GM12878 (cell line): ENCODE measurements at regions of chr3 and their contacts with region 1.

Region 1: GRCh38 chr3:160027541-160028195 is 39.0 kb downstream of the IL12A start:
- DNase-seq: peak; percentile 55
- ATAC-seq: peak; percentile 89
- H3K4me3 ChIP-seq: no peak overlapping the region
- H3K27ac ChIP-seq: peak overlapping the region; percentile 94
- H3K4me1 ChIP-seq: peaks cover 26% of the 10 kb centered on the region
- H3K27me3 ChIP-seq: no peaks in the 10 kb centered on the region
- CTCF ChIP-seq: no peak
- EP300 ChIP-seq: peak; percentile 61 to 64; a peak in 2 of 4 replicates
- POLR2A ChIP-seq: no peak
- RAD21 ChIP-seq: no peak

Region 2: GRCh38 chr3:160012108-160012507 is 15.6 kb before region 1 on chr3:
- CTCF ChIA-PET with region 1: interaction called, 8 read pairs
- POLR2A ChIA-PET with region 1: interaction called, 5 read pairs
- RAD21 ChIA-PET with region 1: interaction called, 13 read pairs
- SMC1A ChIA-PET with region 1: interaction called, 26 read pairs
- in situ Hi-C with region 1: no loop called
- intact Hi-C with region 1: loop called (anchors 2 kb)
- DNase-seq: peak; percentile 81
- ATAC-seq: peak; percentile 83
- H3K4me3 ChIP-seq: peak overlapping the region; percentile 22; the same call in 1 of the 2 replicates
- H3K27ac ChIP-seq: peak overlapping the region; percentile 94
- H3K4me1 ChIP-seq: peaks cover 48% of the 10 kb centered on the region
- H3K27me3 ChIP-seq: no peaks in the 10 kb centered on the region
- CTCF ChIP-seq: no peak
- EP300 ChIP-seq: peak; percentile 87 to 95; a peak in 3 of 4 replicates
- POLR2A ChIP-seq: no peak
- RAD21 ChIP-seq: no peak

Region 3: DNA sequence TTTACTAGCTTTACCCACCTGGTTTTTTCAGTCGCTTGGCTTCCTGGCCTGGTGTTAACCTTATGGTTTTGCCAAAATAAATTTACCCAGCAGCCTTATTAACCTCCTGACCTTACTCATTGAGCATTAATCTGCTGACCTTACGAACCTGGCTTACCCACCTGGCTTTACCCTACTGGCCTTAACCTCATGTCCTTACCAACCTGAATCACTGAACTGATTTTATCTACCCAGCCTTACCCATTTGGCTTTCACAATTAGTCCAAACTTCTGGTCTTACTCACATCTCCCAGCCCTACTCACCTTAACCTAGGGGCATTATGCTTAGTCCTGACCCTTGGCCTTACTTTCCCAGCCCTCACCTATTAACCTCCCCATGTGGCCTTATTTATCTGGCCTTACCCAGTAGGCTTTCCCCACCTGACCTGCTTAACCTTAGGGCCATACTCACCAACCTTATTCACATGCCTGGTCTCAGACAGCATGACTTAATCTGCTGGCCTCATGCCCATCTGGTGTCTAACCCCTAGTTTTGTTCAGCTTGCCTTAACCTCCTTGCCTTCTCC is 54.4 kb after region 1 on chr3:
- CTCF ChIA-PET with region 1: no interaction called
- POLR2A ChIA-PET with region 1: no interaction called
- RAD21 ChIA-PET with region 1: no interaction called
- SMC1A ChIA-PET with region 1: no interaction called
- in situ Hi-C with region 1: no loop called
- intact Hi-C with region 1: no loop called
- DNase-seq: no peak
- ATAC-seq: no peak
- H3K4me3 ChIP-seq: no peak overlapping the region
- H3K27ac ChIP-seq: no peak overlapping the region
- H3K4me1 ChIP-seq: no peaks in the 10 kb centered on the region
- H3K27me3 ChIP-seq: no peaks in the 10 kb centered on the region
- CTCF ChIP-seq: no peak
- EP300 ChIP-seq: no peak
- POLR2A ChIP-seq: no peak
- RAD21 ChIP-seq: no peak

Region 4: DNA sequence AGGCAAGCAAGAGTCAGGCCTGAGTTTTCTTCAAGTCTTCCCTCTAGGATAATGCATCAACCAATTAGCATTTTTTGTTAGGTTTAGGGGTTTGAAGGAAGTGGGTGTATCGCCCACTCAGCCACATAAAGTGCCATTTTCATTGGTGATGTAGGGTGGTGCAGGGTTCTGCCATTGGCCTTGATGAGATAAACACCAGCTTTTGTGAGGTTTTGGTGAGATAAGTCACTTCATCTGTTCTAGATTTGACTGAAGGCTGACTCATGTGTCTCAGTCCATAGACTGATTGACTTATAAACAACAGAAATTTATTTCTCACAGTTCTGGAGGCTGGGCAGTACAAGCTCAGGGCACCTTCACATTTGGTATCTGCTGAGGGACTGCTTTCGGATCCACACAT is 113.1 kb after region 1 on chr3:
- CTCF ChIA-PET with region 1: no interaction called
- POLR2A ChIA-PET with region 1: no interaction called
- RAD21 ChIA-PET with region 1: no interaction called
- SMC1A ChIA-PET with region 1: no interaction called
- in situ Hi-C with region 1: no loop called
- intact Hi-C with region 1: no loop called
- DNase-seq: no peak
- ATAC-seq: peak; percentile 47
- H3K4me3 ChIP-seq: no peak overlapping the region
- H3K27ac ChIP-seq: no peak overlapping the region
- H3K4me1 ChIP-seq: peaks cover 7% of the 10 kb centered on the region; the same call in 1 of the 2 replicates
- H3K27me3 ChIP-seq: no peaks in the 10 kb centered on the region
- CTCF ChIP-seq: no peak
- EP300 ChIP-seq: no peak
- POLR2A ChIP-seq: no peak
- RAD21 ChIP-seq: no peak

Region 5: DNA sequence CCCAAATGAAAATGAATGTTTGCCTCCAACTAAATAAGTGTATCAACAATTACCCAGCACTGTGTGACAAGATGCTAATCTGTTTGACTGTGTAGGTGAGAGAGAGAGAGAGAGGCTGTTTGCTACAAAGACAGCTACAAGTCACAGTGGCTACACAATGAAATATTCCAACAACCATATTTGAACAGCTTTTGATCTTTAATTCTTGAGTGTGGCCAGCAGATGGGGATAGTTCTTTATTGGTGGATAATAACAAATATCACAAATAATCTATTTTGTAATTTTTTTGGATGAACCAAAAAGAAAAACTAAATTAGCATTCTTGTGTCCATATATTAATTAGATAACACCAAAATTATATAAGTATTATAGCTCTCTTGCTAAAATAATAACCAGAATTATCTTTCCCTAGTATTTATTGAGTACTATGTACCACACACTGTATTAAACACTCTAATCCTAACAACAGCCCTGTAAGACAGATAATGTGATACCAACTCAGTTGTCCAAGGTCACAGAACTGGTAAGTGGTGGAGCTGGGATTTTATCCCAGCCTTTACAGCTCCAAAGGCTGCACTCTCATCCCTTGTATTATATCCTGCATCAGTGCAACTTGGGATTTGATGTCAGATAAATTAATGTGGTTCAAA is 135.7 kb after region 1 on chr3:
- CTCF ChIA-PET with region 1: interaction called, 10 read pairs
- POLR2A ChIA-PET with region 1: interaction called, 3 read pairs
- RAD21 ChIA-PET with region 1: interaction called, 4 read pairs
- SMC1A ChIA-PET with region 1: interaction called, 5 read pairs
- in situ Hi-C with region 1: no loop called
- intact Hi-C with region 1: no loop called
- DNase-seq: no peak
- ATAC-seq: peak; percentile 68
- H3K4me3 ChIP-seq: no peak overlapping the region
- H3K27ac ChIP-seq: no peak overlapping the region
- H3K4me1 ChIP-seq: no peaks in the 10 kb centered on the region
- H3K27me3 ChIP-seq: no peaks in the 10 kb centered on the region
- CTCF ChIP-seq: peak; percentile 15 to 50 (median 15); a peak in 2 of 6 replicates
- EP300 ChIP-seq: no peak
- POLR2A ChIP-seq: no peak
- RAD21 ChIP-seq: peak; percentile 68

Region 6: GRCh38 chr3:160343132-160343531 is 315.5 kb after region 1 on chr3:
- CTCF ChIA-PET with region 1: interaction called, 11 read pairs
- POLR2A ChIA-PET with region 1: no interaction called
- RAD21 ChIA-PET with region 1: interaction called, 3 read pairs
- SMC1A ChIA-PET with region 1: interaction called, 5 read pairs
- in situ Hi-C with region 1: loop called (anchors 5 kb)
- intact Hi-C with region 1: loop called (anchors 1 kb)
- DNase-seq: no peak
- ATAC-seq: no peak
- H3K4me3 ChIP-seq: no peak overlapping the region
- H3K27ac ChIP-seq: no peak overlapping the region
- H3K4me1 ChIP-seq: no peaks in the 10 kb centered on the region
- H3K27me3 ChIP-seq: no peaks in the 10 kb centered on the region
- CTCF ChIP-seq: peak in 2 of 3 experiments; percentile 7 to 47; a peak in 2 of 6 replicates
- EP300 ChIP-seq: no peak
- POLR2A ChIP-seq: no peak
- RAD21 ChIP-seq: peak; percentile 61

Region 7: DNA sequence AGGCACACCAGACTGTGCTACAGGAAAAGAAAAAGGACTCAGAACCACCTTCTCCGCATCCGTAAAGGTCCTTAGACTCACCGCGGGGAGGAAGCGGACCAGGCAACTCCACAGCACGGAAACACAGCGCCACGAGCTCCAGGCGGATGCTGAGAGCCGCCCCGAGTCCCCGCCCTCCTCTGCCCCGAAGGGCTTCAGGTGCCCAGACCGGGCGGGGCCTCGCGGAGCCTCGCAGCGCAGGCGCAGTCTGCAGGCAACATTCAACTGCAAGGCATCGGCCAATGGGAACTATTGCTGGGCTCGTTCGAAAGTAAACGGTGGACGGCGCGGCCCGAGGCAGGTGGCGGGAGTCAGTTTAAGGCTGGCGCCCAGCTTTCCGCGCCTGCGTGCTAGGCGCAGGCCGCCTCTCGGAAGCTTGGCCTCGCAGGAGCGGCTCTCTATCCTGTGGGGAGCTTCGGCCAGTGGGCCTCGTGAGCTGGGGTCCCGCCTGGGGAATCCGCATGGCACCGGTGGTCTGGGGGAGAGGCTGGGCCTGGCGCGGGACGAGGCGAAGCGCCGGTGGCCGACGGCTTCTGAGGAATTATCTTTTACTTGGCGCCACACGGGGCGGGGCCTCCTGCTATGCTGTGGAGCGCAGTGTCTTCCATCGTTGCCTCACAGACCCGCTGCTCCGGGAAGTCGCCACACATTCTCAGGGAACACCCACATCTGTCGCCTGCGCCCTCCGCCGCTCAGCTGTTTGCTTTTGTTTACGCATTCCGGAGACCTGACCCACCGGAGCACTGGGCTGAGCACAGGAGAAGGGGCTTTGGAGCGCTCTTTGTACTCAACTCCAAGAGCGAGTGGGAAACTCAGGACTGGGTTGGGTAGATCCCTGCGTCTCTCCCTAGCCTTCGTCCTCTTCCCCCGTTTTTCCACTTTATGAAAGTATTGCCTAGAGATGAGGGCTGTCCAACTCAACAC is 422.2 kb after region 1 on chr3 and contains the start of gene TRIM59:
- CTCF ChIA-PET with region 1: interaction called, 3 read pairs
- POLR2A ChIA-PET with region 1: interaction called, 10 read pairs
- RAD21 ChIA-PET with region 1: no interaction called
- SMC1A ChIA-PET with region 1: interaction called, 3 read pairs
- in situ Hi-C with region 1: no loop called
- intact Hi-C with region 1: no loop called
- DNase-seq: peak; percentile 96
- ATAC-seq: peak; percentile 90
- H3K4me3 ChIP-seq: peak within 1 kb of the TSS; percentile 89
- H3K27ac ChIP-seq: peak within 1 kb of the TSS; percentile 94
- H3K4me1 ChIP-seq: peaks cover 6% of the 10 kb centered on the region
- H3K27me3 ChIP-seq: no peaks in the 10 kb centered on the region
- CTCF ChIP-seq: 0 out of 6 replicates have a peak, but pooled peaks of 2 of the 3 experiments have one; percentile 5 to 10
- EP300 ChIP-seq: no peak
- POLR2A ChIP-seq: peak; percentile 99
- RAD21 ChIP-seq: no peak
- polyA plus RNA-seq, gene TRIM59: 28.9 to 105 TPM